ENCODE measurements at regions of chr9 and their contacts with region 1.

Region 1: DNA sequence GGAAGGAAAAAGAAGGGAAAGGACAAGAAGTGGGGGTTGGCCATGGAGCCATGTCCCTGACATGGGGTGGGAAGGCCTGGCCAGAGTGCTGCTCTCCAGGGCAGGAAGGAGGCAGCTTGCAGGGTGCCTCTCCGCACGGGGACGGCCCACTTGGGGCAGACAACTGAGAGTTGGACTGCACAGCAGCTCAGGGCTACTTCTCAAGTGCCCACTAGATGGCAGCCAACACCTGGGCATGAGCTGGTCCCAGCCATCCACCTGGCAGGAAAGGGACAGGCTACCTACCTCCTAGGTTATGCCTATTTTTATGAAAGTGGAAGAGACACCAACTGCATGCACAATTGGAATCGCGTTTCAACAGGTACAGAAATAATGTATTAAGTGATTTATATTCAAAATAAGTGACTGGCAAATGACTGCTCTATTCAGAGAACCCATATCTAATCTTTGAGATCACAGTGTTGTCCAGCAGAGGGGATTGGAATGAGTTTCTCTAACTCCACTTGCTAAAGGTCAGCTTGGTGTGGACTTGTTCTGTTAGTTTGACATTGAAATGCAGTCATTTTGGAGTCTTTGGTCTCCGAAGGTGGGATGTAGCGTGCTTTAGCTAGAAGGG is 113.4 kb downstream of the SYK start:
- DNase-seq: peak; percentile 49
- H3K4me3 ChIP-seq: no peak overlapping the region
- H3K27ac ChIP-seq: no peak overlapping the region
- H3K27me3 ChIP-seq: no peaks in the 10 kb centered on the region
- CTCF ChIP-seq: peak; percentile 90

Region 2: DNA sequence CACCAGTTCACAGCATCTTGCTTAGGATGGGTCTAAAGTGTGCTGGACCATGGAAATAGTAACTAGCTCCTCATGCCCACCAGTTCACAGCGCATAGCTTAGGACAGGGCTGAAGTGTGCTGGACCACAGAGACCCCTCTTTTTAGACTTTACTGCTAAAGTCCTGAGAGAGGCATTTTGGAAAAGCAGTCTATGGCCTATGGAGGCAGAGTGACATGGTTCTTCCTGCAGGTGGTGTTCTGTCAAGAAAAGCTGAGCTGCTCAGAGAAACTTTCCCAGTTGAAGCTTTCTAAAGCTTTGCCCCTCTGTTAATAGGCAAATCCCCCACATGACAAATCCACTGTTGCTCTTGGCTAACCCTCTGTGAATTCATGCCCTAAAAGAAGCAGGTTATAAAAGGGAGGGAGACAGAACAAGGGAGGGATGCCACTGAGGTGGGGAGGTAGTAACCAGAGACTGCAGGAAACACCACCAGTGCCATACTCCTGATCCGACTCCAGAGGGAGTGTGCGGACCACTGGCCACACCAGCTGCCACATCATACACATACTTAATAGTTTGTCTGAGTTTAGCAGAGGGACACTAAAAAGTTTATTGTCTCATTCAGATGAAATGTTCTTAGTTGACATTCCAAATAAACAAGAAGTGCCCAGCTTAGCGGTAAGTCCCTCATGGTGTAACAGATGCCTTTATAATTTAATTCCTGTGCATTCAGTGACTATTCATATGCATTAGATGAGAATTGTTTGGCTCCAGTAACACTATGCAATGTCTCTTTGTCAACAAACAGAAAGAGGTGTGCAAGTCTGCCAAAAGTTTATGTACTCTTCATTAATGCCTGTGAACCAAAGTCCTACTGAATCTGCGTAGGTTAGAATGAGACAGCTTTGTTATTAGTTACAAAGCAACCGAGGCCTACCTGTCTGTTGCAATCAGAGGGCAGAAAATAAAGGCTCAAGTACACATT is 744.8 kb after region 1 on chr9:
- in situ Hi-C with region 1: loop called (anchors 25 kb)
- DNase-seq: peak; percentile 37
- H3K4me3 ChIP-seq: no peak overlapping the region
- H3K27ac ChIP-seq: no peak overlapping the region
- H3K27me3 ChIP-seq: no peaks in the 10 kb centered on the region
- CTCF ChIP-seq: peak; percentile 85